ENCODE measurements at regions of chr5 and their contacts with region 1.

Region 1: GRCh38 chr5:9054821-9055589 is 490.9 kb downstream of the SEMA5A start:
- DNase-seq: peak; percentile 18
- ATAC-seq: no peak
- H3K4me3 ChIP-seq: no peak overlapping the region
- H3K27ac ChIP-seq: peak overlapping the region; percentile 45; the same call in 1 of the 2 replicates
- H3K4me1 ChIP-seq: peaks cover 13% of the 10 kb centered on the region
- H3K27me3 ChIP-seq: no peaks in the 10 kb centered on the region
- CTCF ChIP-seq: no peak
- POLR2A ChIP-seq: no peak
- RAD21 ChIP-seq: no peak

Region 2: GRCh38 chr5:8848998-8849594 is 205.9 kb before region 1 on chr5:
- CTCF ChIA-PET with region 1: no interaction called
- POLR2A ChIA-PET with region 1: no interaction called
- dilution Hi-C with region 1: no loop called
- in situ Hi-C with region 1: no loop called
- intact Hi-C with region 1: loop called (anchors 1 kb)
- DNase-seq: peak; percentile 89
- ATAC-seq: peak; percentile 56
- H3K4me3 ChIP-seq: no peak overlapping the region
- H3K27ac ChIP-seq: no peak overlapping the region
- H3K4me1 ChIP-seq: peaks cover 10% of the 10 kb centered on the region
- H3K27me3 ChIP-seq: no peaks in the 10 kb centered on the region
- CTCF ChIP-seq: no peak
- POLR2A ChIP-seq: no peak
- RAD21 ChIP-seq: no peak